ENCODE measurements at regions of chr5 and their contacts with region 1.

Region 1: GRCh38 chr5:35822511-35822910 is 34.2 kb upstream of the IL7R start:
- DNase-seq: peak; percentile 59 to 70 (median 66)
- H3K4me3 ChIP-seq: peak overlapping the region in 1 of 2 donors; percentile 11
- H3K4me3 Mint-ChIP-seq: peak overlapping the region; percentile 27 to 95 (median 72)
- H3K27ac ChIP-seq: peak overlapping the region; percentile 46
- H3K27ac Mint-ChIP-seq: peak overlapping the region; percentile 74 to 98 (median 92)
- H3K4me1 ChIP-seq: peaks cover 99% of the 10 kb centered on the region
- H3K4me1 Mint-ChIP-seq: peaks cover 77 to 91% (median 84%) of the 10 kb centered on the region in 4 donors
- H3K27me3 ChIP-seq: no peaks in the 10 kb centered on the region
- H3K27me3 Mint-ChIP-seq: no peaks in the 10 kb centered on the region

Region 2: DNA sequence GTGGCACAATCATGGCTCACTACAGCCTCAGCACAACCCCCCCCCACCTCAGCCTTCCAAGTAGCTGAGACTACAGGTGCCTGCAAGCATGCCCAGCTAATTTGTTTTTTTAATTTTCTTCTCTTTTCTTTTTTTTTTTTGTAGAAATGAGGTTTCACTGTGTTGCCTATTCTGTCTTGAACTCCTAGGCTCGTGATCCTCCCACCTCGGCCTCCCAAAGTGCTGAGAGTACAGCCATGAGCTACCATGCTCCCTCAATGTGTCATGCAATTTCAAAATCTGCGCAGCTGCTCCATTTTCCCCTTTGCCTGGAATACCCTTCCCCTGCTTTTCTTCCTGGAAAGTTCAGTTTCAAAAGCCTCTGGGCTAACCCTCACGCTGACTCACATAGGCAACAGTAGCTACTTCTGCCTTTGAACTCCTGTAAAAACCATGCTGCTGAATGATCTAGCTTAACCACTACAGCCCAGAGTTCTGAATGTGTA is 36.9 kb before region 1 on chr5:
- CTCF ChIA-PET with region 1: interaction called, 56 read pairs
- POLR2A ChIA-PET with region 1: interaction called, 233 read pairs
- intact Hi-C with region 1: no loop called
- DNase-seq: peak in 1 of 5 donors; percentile 44
- H3K4me3 ChIP-seq: no peak overlapping the region
- H3K4me3 Mint-ChIP-seq: peak overlapping the region in 7 of 8 donors; percentile 6 to 78 (median 65)
- H3K27ac ChIP-seq: no peak overlapping the region
- H3K27ac Mint-ChIP-seq: peak overlapping the region; percentile 45 to 94 (median 67)
- H3K4me1 ChIP-seq: peaks cover 83% of the 10 kb centered on the region
- H3K4me1 Mint-ChIP-seq: peaks cover 53 to 91% (median 76%) of the 10 kb centered on the region in 4 donors
- H3K27me3 ChIP-seq: no peaks in the 10 kb centered on the region
- H3K27me3 Mint-ChIP-seq: no peaks in the 10 kb centered on the region

Region 3: GRCh38 chr5:35794684-35795375 is 27.7 kb before region 1 on chr5:
- CTCF ChIA-PET with region 1: interaction called, 11 read pairs
- POLR2A ChIA-PET with region 1: interaction called, 30 read pairs
- intact Hi-C with region 1: no loop called
- DNase-seq: no peak
- H3K4me3 ChIP-seq: peak overlapping the region in 1 of 2 donors; percentile 22
- H3K4me3 Mint-ChIP-seq: peak overlapping the region; percentile 33 to 89 (median 60)
- H3K27ac ChIP-seq: peak overlapping the region; percentile 12
- H3K27ac Mint-ChIP-seq: peak overlapping the region; percentile 84 to 97 (median 89)
- H3K4me1 ChIP-seq: peaks cover 88% of the 10 kb centered on the region
- H3K4me1 Mint-ChIP-seq: peaks cover 57 to 92% (median 78%) of the 10 kb centered on the region in 4 donors
- H3K27me3 ChIP-seq: no peaks in the 10 kb centered on the region
- H3K27me3 Mint-ChIP-seq: no peaks in the 10 kb centered on the region

Region 4: DNA sequence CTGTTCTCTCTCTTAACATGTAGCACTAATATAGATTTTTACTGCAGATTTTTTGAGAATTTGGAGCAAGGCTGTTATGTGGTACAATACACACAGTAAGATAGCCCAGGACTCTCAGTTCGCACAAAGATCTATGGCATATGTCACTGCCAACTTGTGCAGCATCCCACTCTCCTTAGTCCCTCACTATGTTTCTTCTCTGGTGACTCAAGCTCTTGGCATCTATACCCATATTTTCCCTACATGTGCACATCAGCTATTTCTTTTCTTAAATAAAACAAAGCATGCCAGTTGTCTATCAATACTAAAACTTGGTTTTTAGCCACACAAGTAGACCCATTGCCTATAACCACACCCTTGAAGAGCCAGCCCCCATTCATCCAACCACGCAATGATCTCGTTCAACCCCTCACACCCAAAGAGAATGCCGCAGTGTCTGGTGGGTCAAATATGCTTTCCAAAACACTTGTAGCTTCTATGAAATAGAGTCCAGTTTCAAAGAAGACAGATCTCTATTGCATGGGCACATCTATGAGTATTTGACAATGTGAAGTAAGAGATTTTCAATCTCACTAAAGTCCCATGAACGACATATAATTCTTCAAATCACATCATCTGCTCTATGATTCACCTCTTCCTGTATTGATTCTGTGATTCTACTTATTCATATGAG is 16.0 kb after region 1 on chr5:
- CTCF ChIA-PET with region 1: interaction called, 20 read pairs
- POLR2A ChIA-PET with region 1: interaction called, 79 read pairs
- intact Hi-C with region 1: no loop called
- DNase-seq: no peak
- H3K4me3 ChIP-seq: peak overlapping the region in 1 of 2 donors; percentile 3
- H3K4me3 Mint-ChIP-seq: peak overlapping the region in 7 of 8 donors; percentile 36 to 86 (median 67)
- H3K27ac ChIP-seq: no peak overlapping the region
- H3K27ac Mint-ChIP-seq: peak overlapping the region; percentile 68 to 94 (median 93)
- H3K4me1 ChIP-seq: peaks cover 73% of the 10 kb centered on the region
- H3K4me1 Mint-ChIP-seq: peaks cover 55 to 80% (median 69%) of the 10 kb centered on the region in 4 donors
- H3K27me3 ChIP-seq: no peaks in the 10 kb centered on the region
- H3K27me3 Mint-ChIP-seq: no peaks in the 10 kb centered on the region